GM12878 (cell line): ENCODE measurements at regions of chr7 and their contacts with region 1.

Region 1: DNA sequence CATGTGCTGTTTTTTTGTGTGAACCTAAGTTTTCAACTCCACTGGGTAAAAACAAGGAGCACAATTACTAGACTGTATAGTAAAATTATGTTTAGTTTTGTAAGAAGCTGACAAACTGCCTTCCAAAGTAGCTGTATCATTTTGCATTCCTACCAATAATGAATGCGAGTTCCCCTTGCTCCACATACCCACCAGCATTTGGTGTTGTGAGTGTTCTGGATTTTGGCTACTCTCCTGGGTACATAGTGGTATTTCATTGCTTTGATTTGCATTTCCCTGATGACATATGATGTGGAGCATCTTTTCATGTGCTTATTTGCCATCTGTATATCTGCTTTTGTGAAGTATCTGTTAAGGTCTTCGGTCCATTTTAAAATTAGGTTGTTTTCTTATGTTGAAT is 178.2 kb downstream of the HIBADH start:
- DNase-seq: no peak
- ATAC-seq: no peak
- H3K4me3 ChIP-seq: no peak overlapping the region
- H3K27ac ChIP-seq: no peak overlapping the region
- H3K4me1 ChIP-seq: no peaks in the 10 kb centered on the region
- H3K27me3 ChIP-seq: no peaks in the 10 kb centered on the region; a peak in 2 of 4 replicates
- CTCF ChIP-seq: no peak
- EP300 ChIP-seq: no peak
- POLR2A ChIP-seq: no peak
- RAD21 ChIP-seq: no peak

Region 2: DNA sequence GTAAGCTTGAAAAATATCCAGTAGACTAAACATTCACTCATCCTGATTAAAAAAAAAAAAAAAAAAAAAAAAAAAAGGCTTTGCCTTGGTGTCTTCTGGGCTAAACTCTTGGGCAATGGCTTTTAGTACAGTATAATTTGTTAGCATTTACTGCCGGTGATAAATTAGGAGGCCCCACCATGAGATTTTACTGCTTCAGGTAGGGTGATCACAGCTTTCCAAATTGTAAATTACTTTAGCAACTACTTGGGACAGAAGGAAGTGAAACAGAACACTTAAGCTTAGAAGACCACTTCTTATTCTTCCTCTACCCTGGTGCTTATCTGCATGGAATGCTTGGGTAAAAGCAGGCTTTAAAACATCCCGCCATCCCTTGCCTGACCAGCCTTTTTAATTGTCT is 26.1 kb after region 1 on chr7:
- CTCF ChIA-PET with region 1: no interaction called
- POLR2A ChIA-PET with region 1: interaction called, 12 read pairs
- RAD21 ChIA-PET with region 1: no interaction called
- SMC1A ChIA-PET with region 1: no interaction called
- in situ Hi-C with region 1: no loop called
- intact Hi-C with region 1: no loop called
- DNase-seq: no peak
- ATAC-seq: no peak
- H3K4me3 ChIP-seq: no peak overlapping the region
- H3K27ac ChIP-seq: no peak overlapping the region
- H3K4me1 ChIP-seq: no peaks in the 10 kb centered on the region
- H3K27me3 ChIP-seq: no peaks in the 10 kb centered on the region
- CTCF ChIP-seq: no peak
- EP300 ChIP-seq: no peak
- POLR2A ChIP-seq: no peak
- RAD21 ChIP-seq: no peak